ENCODE measurements at regions of chr17 and their contacts with region 1.

Region 1: DNA sequence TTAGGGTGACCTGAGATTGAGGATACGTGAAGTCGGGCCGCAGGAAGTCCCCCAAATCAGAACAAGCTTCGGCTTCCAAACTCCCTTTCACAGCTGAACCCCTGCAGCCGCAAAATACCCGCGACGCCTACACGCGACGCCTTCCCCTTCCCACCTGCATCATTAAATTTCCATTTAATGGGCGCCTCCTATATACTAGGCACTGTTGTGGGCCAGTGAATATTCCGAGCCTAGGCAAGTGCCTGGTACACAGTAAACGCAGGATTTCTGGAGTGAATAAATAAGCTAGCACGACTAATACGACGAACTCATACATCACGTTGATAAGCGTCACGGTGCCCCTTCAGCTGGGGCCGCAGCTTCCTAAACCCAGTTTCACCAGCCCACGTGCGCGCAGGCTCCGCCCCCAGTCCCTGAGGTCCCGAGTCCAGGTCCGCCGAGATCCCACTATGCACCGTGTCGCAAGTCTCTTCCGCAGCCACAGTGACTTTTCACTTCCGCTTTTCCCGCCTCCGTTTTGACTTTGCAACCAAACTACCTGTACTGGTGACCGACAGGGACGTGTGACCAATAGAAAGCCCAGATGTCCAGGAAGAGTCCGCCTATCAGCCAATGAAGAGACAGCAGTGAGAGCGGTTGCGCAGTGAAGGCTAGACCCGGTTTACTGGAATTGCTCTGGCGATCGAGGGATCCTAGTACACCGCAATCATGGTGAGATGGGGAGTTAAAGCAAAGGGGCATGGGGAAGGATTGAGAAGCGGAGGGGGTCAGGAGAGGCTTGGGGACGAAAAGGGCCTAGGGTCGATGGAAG is at the start of gene PSMB3:
- DNase-seq: peak; percentile 96 to 99 (median 98)
- ATAC-seq: peak; percentile 76 to 93 (median 88)
- H3K4me3 ChIP-seq: peak within 1 kb of the TSS; percentile 61 to 99 (median 94)
- H3K27ac ChIP-seq: peak within 1 kb of the TSS; percentile 37 to 99 (median 96)
- H3K4me1 ChIP-seq: peaks cover 0 to 62% (median 38%) of the 10 kb centered on the region in 12 donors
- H3K27me3 ChIP-seq: peaks cover 0 to 24% (median 0%) of the 10 kb centered on the region in 9 donors
- CTCF ChIP-seq: no peak
- POLR2A ChIP-seq: peak in 1 of 2 donors; percentile 51
- total RNA-seq, gene PSMB3: 145 to 305 (median 194) TPM

Region 2: GRCh38 chr17:38702166-38702899 is 50.0 kb before region 1 on chr17:
- intact Hi-C with region 1: loop called in 1 of 10 experiments (anchors 2 kb)
- DNase-seq: peak; percentile 87 to 93 (median 92)
- ATAC-seq: peak; percentile 43 to 76 (median 68)
- H3K4me3 ChIP-seq: peak overlapping the region; percentile 45 to 97 (median 87)
- H3K27ac ChIP-seq: peak overlapping the region; percentile 82 to 99 (median 97)
- H3K4me1 ChIP-seq: peaks cover 4 to 62% (median 27%) of the 10 kb centered on the region in 12 donors
- H3K27me3 ChIP-seq: no peaks in the 10 kb centered on the region
- CTCF ChIP-seq: no peak
- POLR2A ChIP-seq: peak in 1 of 2 donors; percentile 85

Region 3: GRCh38 chr17:38799378-38800236 is 47.3 kb after region 1 on chr17 and contains the start of gene PIP4K2B:
- intact Hi-C with region 1: loop called in 5 of 10 experiments (anchors 2 to 5 kb)
- DNase-seq: peak; percentile 96 to 98 (median 96)
- ATAC-seq: peak; percentile 93 to 97 (median 96)
- H3K4me3 ChIP-seq: peak within 1 kb of the TSS; percentile 65 to 98 (median 82)
- H3K27ac ChIP-seq: peak within 1 kb of the TSS; percentile 89 to 100 (median 99)
- H3K4me1 ChIP-seq: peaks cover 6 to 42% (median 27%) of the 10 kb centered on the region in 12 donors
- H3K27me3 ChIP-seq: no peaks in the 10 kb centered on the region
- CTCF ChIP-seq: no peak
- POLR2A ChIP-seq: peak in 1 of 2 donors; percentile 57
- total RNA-seq, gene PIP4K2B: 39.4 to 55.0 (median 48.5) TPM